GM12878 (cell line): ENCODE measurements at regions of chr4 and their contacts with region 1.

Region 1: GRCh38 chr4:145234091-145234706 is 53.8 kb upstream of the OTUD4 start:
- DNase-seq: peak; percentile 49
- ATAC-seq: peak; percentile 100
- H3K4me3 ChIP-seq: no peak overlapping the region
- H3K27ac ChIP-seq: no peak overlapping the region
- H3K4me1 ChIP-seq: no peaks in the 10 kb centered on the region
- H3K27me3 ChIP-seq: no peaks in the 10 kb centered on the region
- CTCF ChIP-seq: peak; percentile 84 to 93 (median 84)
- EP300 ChIP-seq: no peak
- POLR2A ChIP-seq: no peak
- RAD21 ChIP-seq: peak; percentile 100

Region 2: DNA sequence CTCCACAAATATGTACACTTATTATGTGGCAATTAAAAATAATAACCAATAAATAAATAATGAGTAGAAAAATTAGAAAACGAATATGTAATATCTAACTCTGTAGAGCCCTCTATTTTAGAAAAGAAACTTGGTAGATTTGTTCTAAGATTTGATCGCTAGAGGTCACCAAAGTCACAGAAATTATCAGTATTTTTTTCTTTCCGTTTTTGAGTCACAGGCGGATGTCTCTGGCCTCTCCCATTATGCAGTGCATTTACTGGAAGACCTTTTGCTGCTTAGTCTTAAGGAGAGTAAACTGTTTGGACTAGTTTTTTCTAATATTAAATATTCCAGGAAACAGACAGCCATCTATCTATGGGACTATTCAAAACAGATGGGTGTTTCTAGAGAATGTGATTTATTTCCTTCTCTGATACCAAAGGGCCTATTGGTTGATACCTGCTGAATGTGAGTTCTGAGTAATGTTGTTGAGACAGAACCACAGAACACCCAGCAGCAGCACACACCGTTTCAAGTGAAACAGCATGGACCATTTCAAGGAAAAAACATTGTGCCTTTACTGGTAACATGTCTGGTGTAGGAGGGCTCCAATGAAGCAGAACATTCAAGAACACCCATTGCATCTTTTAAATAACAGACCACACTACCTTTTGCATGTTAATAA is 1059.7 kb before region 1 on chr4:
- CTCF ChIA-PET with region 1: no interaction called
- POLR2A ChIA-PET with region 1: no interaction called
- RAD21 ChIA-PET with region 1: no interaction called
- SMC1A ChIA-PET with region 1: no interaction called
- in situ Hi-C with region 1: no loop called
- intact Hi-C with region 1: loop called (anchors 10 kb)
- DNase-seq: peak; percentile 16
- ATAC-seq: peak; percentile 86
- H3K4me3 ChIP-seq: no peak overlapping the region
- H3K27ac ChIP-seq: no peak overlapping the region
- H3K4me1 ChIP-seq: no peaks in the 10 kb centered on the region
- H3K27me3 ChIP-seq: no peaks in the 10 kb centered on the region; a peak in 1 of 4 replicates
- CTCF ChIP-seq: peak; percentile 32 to 63 (median 40); a peak in 5 of 6 replicates
- EP300 ChIP-seq: no peak
- POLR2A ChIP-seq: no peak
- RAD21 ChIP-seq: peak; percentile 83

Region 3: DNA sequence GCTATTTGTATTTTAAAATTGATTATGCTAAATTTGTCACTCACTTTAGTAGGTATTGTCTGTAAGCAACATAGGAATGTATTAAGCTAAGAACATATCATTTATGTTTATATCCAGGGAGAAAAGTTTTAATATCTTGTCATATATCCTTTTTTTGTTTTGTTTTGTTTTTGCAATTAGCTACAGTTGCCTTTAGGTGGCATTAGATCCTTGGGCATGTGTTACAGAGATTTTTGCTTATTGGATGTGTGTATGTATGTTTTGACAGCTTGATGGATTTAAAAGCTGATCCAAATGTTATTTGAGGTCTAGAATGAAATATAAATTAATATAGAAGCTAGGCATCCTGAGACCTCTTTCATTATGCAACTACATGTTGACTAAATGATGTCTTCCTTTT is 17.7 kb before region 1 on chr4:
- CTCF ChIA-PET with region 1: interaction called, 38 read pairs
- POLR2A ChIA-PET with region 1: no interaction called
- RAD21 ChIA-PET with region 1: interaction called, 31 read pairs
- SMC1A ChIA-PET with region 1: interaction called, 38 read pairs
- in situ Hi-C with region 1: no loop called
- intact Hi-C with region 1: no loop called
- DNase-seq: no peak
- ATAC-seq: 0 out of 3 replicates have a peak, but pooled peaks have one; percentile 46
- H3K4me3 ChIP-seq: no peak overlapping the region
- H3K27ac ChIP-seq: no peak overlapping the region
- H3K4me1 ChIP-seq: peaks cover 3% of the 10 kb centered on the region; the same call in 1 of the 2 replicates
- H3K27me3 ChIP-seq: no peaks in the 10 kb centered on the region
- CTCF ChIP-seq: peak; percentile 45 to 59 (median 50); a peak in 5 of 6 replicates
- EP300 ChIP-seq: no peak
- POLR2A ChIP-seq: no peak
- RAD21 ChIP-seq: peak; percentile 88

Region 4: GRCh38 chr4:145482209-145483037 is 248.2 kb after region 1 on chr4:
- CTCF ChIA-PET with region 1: interaction called, 3 read pairs
- POLR2A ChIA-PET with region 1: no interaction called
- RAD21 ChIA-PET with region 1: no interaction called
- SMC1A ChIA-PET with region 1: interaction called, 4 read pairs
- in situ Hi-C with region 1: no loop called
- intact Hi-C with region 1: loop called (anchors 1 kb)
- DNase-seq: peak; percentile 28
- ATAC-seq: peak; percentile 58
- H3K4me3 ChIP-seq: peak overlapping the region; percentile 81
- H3K27ac ChIP-seq: peak overlapping the region; percentile 85
- H3K4me1 ChIP-seq: peaks cover 2% of the 10 kb centered on the region; the same call in 1 of the 2 replicates
- H3K27me3 ChIP-seq: peaks cover 0 to 3% of the 10 kb centered on the region in 2 experiments; a peak in 1 of 4 replicates
- CTCF ChIP-seq: no peak
- EP300 ChIP-seq: no peak
- POLR2A ChIP-seq: 0 out of 2 replicates have a peak, but pooled peaks have one; percentile 28
- RAD21 ChIP-seq: peak; percentile 3; the same call in 1 of the 2 replicates

Region 5: GRCh38 chr4:145557720-145558119 is 323.5 kb after region 1 on chr4:
- CTCF ChIA-PET with region 1: interaction called, 139 read pairs
- POLR2A ChIA-PET with region 1: no interaction called
- RAD21 ChIA-PET with region 1: interaction called, 54 read pairs
- SMC1A ChIA-PET with region 1: interaction called, 83 read pairs
- in situ Hi-C with region 1: loop called (anchors 5 kb)
- intact Hi-C with region 1: loop called (anchors 1 kb)
- DNase-seq: peak; percentile 20
- ATAC-seq: peak; percentile 98
- H3K4me3 ChIP-seq: no peak overlapping the region
- H3K27ac ChIP-seq: no peak overlapping the region
- H3K4me1 ChIP-seq: peaks cover 2% of the 10 kb centered on the region; the same call in 1 of the 2 replicates
- H3K27me3 ChIP-seq: no peaks in the 10 kb centered on the region
- CTCF ChIP-seq: peak; percentile 92 to 96 (median 96)
- EP300 ChIP-seq: no peak
- POLR2A ChIP-seq: no peak
- RAD21 ChIP-seq: peak; percentile 95

Region 6: DNA sequence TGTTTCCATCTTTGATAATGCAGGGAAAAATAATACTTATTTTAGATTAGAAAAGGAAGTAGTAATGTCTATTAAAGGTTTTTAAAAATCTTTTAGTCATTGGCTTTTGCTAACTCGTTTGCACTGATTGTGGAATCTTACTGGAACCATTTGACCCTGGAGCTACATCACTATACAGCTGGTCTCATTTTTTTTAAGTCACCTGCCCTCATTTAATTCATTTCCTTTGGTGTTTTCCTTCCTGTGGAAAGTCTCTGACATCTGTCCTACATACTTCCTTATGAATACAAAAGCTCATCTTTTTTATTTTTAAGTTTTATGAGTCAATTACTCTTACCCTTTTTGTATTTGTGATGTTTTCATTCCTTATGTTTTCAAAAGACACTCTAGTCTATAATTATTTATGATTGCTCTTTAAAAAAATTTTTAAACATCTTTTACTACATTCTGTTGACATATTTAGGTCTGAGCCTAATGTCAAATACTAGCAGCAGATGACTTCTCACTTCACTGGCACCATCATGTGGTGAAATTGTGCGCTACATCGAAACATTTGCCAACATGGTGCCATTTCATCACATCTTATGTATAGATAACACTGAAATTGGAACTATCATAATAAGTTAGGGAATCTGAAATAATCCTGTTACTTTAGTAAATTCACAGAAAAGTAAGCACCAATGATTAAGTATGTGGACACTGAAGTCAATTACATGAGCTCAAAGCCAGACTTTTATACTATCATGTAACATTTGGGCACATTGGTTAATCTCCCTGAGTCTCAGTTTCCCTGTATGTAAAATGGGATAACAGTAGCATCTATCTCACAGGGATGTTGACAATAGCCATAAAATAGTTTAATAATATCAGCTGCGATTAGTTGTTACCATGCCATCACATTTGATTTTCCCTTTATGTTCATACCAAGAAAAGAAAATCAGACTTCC is 375.6 kb after region 1 on chr4:
- CTCF ChIA-PET with region 1: interaction called, 86 read pairs
- POLR2A ChIA-PET with region 1: no interaction called
- RAD21 ChIA-PET with region 1: interaction called, 12 read pairs
- SMC1A ChIA-PET with region 1: interaction called, 25 read pairs
- in situ Hi-C with region 1: no loop called
- intact Hi-C with region 1: loop called (anchors 1 kb)
- DNase-seq: peak; percentile 58
- ATAC-seq: peak; percentile 90
- H3K4me3 ChIP-seq: no peak overlapping the region
- H3K27ac ChIP-seq: no peak overlapping the region
- H3K4me1 ChIP-seq: no peaks in the 10 kb centered on the region
- H3K27me3 ChIP-seq: no peaks in the 10 kb centered on the region
- CTCF ChIP-seq: peak; percentile 72 to 83 (median 82)
- EP300 ChIP-seq: no peak
- POLR2A ChIP-seq: no peak
- RAD21 ChIP-seq: peak; percentile 97